Caco-2 (cell line): ENCODE measurements at regions of chr5 and their contacts with region 1.

Region 1: DNA sequence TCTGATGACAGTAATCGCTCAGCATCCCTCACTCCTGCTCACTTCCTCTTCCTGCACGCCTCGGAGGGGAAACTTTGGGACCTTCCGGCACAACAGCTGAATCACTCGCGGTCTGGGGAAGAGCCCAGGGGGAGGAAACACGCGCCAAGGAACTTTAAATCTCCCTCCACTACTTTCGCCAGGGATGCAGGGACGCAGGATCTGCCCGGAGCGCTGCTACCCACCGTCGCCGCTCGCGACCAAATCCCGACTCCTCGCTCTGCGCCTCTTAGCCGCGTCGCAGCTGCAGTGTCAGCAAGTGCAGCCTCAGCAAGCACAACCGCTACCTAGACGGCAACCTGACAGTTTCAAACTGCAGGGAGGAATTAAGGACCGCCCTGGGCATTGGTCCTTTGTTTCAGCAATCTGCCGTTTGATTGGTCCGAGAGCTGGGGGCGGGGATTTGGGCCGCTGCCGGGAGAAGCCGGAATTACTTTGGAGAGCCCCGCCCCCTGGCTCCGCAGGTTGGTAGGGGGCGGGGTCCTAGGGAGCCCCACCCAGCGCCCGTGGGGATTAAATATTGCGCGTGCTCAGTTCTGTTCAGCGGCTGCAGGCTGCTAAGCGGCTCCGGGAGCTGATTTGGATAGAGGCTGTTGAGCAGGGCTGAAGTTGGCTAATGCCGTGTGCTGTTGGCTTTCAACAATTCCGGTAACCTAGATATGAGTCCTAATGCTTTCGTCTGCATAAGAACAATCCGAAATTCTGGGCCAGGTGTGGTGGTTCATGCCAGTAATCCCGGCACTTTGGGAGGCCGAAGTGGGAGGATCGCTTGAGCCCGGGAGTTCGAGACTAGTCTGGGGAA is at the start of gene POC5:
- DNase-seq: peak; percentile 98 to 99
- H3K4me3 ChIP-seq: peak within 1 kb of the TSS; percentile 86
- H3K4me3 Mint-ChIP-seq: peak within 1 kb of the TSS; percentile 99
- H3K27ac Mint-ChIP-seq: peak within 1 kb of the TSS; percentile 98
- H3K4me1 ChIP-seq: 0 out of 2 replicates have a peak, but pooled peaks cover 6% of the 10 kb centered on the region
- H3K4me1 Mint-ChIP-seq: peaks cover 23% of the 10 kb centered on the region
- H3K27me3 ChIP-seq: no peaks in the 10 kb centered on the region
- H3K27me3 Mint-ChIP-seq: no peaks in the 10 kb centered on the region
- CTCF ChIP-seq: no peak
- total RNA-seq, gene POC5: 12.7 and 13.6 TPM in 2 replicates

Region 2: DNA sequence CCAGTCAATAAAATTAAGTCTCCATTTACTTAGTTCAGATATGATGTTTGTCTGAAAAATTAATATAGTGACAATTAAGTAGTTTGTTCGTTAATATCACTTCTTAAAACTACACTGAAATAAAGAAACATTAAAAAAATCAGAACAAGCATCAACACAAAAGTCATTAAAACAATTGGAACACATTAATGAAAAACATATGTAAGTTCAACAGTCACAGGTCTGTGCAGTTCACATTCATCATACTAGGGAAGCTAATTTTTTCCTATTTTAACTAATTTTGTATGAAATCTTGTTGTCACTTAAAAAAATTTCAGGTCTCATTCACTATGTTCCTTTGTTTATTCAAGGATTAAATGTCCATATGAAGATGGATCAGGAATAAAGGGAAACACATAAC is 22.5 kb before region 1 on chr5:
- CTCF ChIA-PET with region 1: no interaction called
- POLR2A ChIA-PET with region 1: no interaction called
- intact Hi-C with region 1: loop called (anchors 1 kb)
- DNase-seq: no peak
- H3K4me3 ChIP-seq: no peak overlapping the region
- H3K4me3 Mint-ChIP-seq: no peak overlapping the region
- H3K27ac Mint-ChIP-seq: no peak overlapping the region
- H3K4me1 ChIP-seq: no peaks in the 10 kb centered on the region
- H3K4me1 Mint-ChIP-seq: no peaks in the 10 kb centered on the region
- H3K27me3 ChIP-seq: no peaks in the 10 kb centered on the region
- H3K27me3 Mint-ChIP-seq: no peaks in the 10 kb centered on the region
- CTCF ChIP-seq: no peak

Region 3: DNA sequence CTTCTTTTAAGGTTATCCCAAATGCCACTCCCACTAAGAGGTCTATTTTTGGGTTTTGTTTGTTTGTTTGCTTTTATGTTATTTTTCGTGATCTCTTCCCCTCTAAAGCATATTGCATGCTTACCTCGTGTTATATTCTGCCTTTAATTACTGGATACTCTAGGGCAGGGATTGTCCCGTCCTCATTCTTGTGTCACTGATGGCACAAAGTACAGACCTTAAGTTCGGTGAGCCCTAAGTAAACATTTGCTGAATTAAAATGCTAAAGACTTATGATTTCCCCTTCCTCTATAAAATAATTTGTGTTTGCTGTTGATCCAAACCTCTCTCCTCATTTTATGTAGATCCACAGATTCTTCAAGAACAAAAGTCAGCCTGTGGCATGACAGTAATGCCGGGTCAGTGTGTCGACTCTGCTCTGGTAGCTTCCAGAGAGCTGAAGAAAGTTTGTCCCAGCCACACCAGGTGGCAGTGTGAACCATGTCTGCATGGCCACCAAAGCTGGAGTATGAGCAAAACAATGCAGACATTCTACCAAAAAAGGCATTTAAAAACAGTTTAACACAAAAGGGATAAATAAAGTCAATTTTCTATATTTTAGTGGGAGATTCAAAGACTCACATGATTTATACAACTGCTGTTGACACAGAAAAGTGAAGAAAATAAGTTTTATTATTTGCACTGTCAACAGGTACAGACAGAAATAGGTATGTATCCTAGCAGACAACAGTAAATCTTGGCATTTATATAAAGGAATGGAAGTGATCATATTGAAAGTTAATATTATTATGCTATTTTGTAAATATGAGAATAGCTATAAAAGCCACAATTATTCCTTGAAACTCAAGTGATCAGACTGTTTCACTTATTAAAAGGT is 17.8 kb after region 1 on chr5:
- CTCF ChIA-PET with region 1: no interaction called
- POLR2A ChIA-PET with region 1: no interaction called
- intact Hi-C with region 1: no loop called
- DNase-seq: peak; percentile 61 to 62
- H3K4me3 ChIP-seq: no peak overlapping the region
- H3K4me3 Mint-ChIP-seq: no peak overlapping the region
- H3K27ac Mint-ChIP-seq: no peak overlapping the region
- H3K4me1 ChIP-seq: no peaks in the 10 kb centered on the region
- H3K4me1 Mint-ChIP-seq: no peaks in the 10 kb centered on the region
- H3K27me3 ChIP-seq: no peaks in the 10 kb centered on the region; the same call in 1 of the 2 replicates
- H3K27me3 Mint-ChIP-seq: peaks cover 7% of the 10 kb centered on the region
- CTCF ChIP-seq: peak; percentile 59 to 80